Cardiac septum (tissue), 1 donor: ENCODE measurements at regions of chrX and their contacts with region 1.

Region 1: GRCh38 chrX:38347136-38347535 is 5.3 kb upstream of the OTC start:
- DNase-seq: no peak

Region 2: DNA sequence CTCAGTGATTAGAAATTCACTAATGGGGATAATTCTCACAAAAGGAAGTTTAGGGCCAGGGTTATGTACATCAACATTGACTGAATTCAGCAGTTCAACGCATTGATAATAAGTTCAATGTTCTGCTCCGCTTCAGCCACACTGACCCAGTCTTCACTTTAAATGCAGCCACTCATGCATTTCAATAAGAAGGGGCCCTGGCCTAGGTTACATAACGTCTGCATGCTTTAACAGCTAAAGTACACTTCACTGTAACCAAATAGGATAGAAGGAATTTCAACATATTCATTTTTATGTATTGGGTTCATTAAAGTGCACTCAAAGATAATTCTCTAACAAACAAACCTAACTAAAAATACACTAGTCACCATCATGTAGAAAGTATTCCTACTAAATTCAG is 201.4 kb after region 1 on chrX:
- intact Hi-C with region 1: no loop called
- DNase-seq: no peak

Region 3: DNA sequence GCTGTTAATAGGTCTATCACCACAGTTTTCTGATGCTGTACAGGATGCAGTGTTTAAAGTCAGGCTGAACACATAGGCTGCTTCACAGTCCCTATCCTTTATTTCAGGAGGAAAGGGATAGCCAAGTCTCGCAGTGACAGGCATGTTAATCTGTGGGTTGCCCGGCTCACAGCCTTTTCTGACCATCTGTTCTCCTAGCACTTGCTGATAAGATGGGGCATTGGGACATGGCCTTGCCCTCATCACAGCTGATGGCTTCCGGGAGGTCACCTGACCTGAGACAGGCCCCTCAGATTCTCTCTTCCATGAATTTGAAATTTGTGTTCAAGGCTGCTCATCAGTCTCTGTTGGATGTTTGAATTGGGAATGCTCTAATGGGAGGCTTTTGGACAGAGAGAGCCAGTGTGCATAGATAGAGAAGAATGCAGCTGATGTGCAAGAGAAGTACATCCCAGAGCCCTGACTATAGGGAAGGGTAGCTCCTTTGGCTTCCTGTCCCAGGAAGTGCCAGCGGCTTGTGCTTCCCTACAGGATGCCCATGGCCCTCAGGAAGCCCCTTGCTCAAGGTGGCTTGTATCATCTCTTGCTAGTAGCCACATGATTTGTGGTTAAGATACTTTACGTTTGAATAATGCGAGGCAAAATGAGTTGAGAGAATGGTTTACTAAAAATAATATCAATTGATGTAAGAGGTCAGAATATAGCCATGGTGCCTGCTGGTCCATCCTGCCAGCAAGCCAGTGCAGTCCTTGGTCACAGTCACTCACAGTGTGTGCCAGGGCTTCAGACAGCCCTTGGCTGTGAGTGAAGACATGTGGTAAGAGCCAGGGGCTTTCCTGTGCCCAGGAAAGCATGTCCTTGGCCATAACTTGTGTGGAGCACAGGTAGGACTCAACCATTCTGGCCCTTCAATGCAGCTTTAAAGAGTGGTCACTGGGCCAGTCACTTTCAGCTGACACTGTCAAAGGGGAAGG is 302.8 kb after region 1 on chrX:
- intact Hi-C with region 1: loop called (anchors 10 kb)
- DNase-seq: no peak